ENCODE measurements at regions of chr4 and their contacts with region 1.

Region 1: GRCh38 chr4:121252224-121252806 is 88.2 kb upstream of the TNIP3 start:
- DNase-seq: peak in 9 of 10 donors; percentile 48 to 74 (median 67)
- H3K4me3 ChIP-seq: no peak overlapping the region
- H3K27ac ChIP-seq: no peak overlapping the region
- H3K27me3 ChIP-seq: no peaks in the 10 kb centered on the region
- CTCF ChIP-seq: peak; percentile 62 to 96 (median 88)

Region 2: DNA sequence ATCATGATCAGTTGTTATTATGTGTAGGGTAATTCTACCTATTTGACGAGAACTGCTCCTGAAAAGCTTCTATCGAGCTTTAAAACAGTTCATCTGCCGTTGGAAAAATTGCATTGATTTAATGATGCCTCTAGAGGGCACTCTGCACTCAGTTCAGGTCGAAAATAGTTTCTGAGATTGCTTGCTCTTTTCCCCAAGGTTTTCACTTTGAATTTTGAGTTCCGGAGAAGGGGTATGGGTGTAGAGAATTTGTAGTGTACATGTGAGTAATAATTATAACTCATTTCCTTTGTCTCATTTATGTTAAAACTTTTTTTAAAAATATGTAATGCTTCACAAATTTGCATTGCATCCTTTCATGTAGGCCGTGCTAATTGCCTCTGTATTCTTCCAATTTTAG is 59.8 kb before region 1 on chr4:
- intact Hi-C with region 1: loop called in 1 of 2 experiments (anchors 2 kb)
- DNase-seq: no peak
- H3K4me3 ChIP-seq: peak overlapping the region in 17 of 59 donors; percentile 4 to 44 (median 22)
- H3K27ac ChIP-seq: no peak overlapping the region
- H3K27me3 ChIP-seq: peaks cover 0 to 15% (median 0%) of the 10 kb centered on the region in 45 donors
- CTCF ChIP-seq: peak; percentile 49 to 87 (median 72)

Region 3: DNA sequence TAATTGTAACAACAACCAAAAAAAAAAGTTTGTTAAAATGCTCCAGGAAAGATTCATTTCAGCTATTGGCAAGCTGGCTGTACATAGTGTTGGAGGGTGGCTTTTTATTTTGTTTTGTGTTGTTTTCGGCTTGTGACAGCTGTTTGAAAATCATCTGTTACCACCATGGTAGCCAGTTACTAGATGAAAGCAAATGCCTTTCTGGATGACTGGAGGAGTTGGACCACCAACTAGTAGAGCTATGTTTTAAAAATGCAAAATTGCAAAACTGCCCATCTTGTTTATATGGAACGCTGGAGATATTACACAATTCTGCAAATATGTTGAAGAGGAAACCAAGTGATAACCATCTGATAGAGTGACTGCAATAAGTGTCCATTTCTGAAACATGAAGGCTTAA is 35.0 kb before region 1 on chr4:
- intact Hi-C with region 1: no loop called
- DNase-seq: no peak
- H3K4me3 ChIP-seq: no peak overlapping the region
- H3K27ac ChIP-seq: no peak overlapping the region
- H3K27me3 ChIP-seq: peaks cover 0 to 11% (median 0%) of the 10 kb centered on the region in 45 donors
- CTCF ChIP-seq: no peak

Measured in dorsolateral prefrontal cortex (tissue), 120 donors.